Right ventricle myocardium superior (tissue), 1 donor: ENCODE measurements at regions of chr11 and their contacts with region 1.

Region 1: DNA sequence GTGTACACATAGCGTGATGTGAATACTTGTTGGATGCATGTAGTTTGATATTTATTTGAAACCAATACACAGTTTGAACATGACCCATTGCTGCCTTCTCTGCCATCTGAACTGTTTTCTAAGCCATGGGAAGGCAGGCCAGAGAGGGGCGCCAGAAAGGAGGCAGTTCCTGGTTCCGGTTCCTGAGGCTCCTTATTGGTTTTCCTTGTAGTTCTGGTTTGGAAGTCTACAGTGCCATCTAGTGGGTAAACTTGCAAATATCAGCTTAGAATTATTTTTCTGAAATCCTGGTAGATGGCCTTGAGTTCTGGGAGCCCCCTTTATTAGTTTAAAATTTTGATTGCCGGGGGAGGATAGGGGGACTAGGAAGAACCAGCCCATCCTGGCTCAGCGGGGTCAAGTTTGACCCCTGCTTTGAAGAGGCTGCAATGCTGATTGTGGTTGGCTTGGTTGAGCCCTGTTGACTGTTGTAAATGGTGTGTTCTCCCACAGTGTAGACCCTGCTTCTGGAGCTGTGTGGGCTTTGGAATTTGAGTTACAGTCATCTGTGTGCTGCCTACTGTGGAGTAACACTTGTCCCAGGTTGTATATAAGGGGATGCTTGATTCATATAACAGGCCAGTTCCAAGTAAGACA is 48.4 kb downstream of the GRAMD1B start:
- DNase-seq: peak; percentile 58
- ATAC-seq: peak; percentile 74

Region 2: DNA sequence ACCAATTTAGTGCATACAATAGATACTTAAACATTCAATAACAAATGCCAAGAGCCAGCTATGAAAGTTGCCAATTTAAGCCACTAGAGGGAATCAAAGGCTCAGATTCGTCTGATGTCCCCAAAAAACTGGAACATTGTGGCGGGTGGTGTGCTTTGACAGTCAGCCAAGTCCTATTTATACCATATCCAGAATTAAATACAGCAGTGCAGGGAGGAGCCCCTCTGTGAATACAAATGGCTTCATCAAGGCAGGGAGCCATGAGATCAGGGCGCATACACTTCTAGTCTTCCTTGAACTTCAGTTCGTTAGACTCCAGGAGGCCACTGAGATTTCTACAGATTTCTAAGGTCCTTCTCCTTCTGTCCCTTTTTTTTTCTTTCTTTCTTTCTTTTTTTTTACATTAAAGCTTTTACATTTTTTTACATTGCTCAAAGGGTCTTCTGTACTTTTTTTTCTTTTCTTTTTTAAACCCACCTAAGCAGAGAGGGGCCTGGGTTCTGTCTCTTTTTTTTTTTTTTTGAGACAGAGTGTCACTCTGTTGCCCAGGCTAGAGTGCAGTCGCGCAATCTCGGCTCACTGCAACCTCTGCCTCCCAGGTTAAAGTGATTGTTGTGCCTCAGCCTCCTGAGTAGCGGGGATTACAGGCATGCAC is 375.0 kb before region 1 on chr11:
- intact Hi-C with region 1: loop called (anchors 10 kb)
- DNase-seq: peak; percentile 56
- ATAC-seq: peak; percentile 86

Region 3: GRCh38 chr11:123261345-123262106 is 216.9 kb before region 1 on chr11:
- intact Hi-C with region 1: no loop called
- DNase-seq: peak; percentile 90
- ATAC-seq: peak; percentile 97

Region 4: DNA sequence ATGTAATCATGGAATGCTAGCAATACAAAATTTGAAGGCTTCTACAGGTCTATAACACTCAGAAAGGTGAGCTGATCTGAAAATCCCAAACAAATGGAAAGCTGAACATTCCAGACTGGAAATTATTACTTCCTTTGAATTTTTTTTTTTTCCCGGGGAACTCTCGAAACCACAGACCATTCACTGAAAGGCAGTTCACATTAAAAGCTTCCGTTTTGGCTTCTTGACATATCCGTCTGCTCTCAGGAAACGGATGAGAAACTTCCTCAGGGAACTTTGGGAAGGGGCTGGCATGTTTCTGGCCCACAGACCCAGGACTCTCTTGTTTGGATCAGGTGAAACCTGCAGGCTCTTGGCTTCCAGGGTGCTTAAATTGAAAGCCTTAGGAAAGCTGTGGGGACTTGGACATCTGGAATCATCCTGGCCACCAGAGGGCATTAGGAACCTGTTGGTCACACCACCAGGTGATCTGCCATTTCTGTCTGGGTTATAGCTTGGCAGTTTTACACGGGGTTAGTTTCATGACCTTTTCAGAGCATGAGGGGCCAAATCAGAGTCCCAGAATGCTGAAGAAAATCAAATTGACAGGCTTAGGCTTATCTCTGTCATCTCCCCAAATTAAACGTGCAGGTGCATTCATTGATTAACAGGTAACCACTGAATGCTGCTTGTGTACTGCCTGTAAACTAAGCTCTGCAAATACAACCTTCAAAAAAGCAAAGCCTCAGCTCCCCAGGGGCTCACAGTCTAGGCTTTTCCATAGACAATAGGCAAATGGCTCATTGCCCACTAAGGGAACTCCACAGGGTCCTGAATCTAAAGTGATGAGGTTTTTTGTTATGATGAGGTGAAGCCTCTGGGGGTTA is 71.1 kb before region 1 on chr11:
- intact Hi-C with region 1: loop called (anchors 5 kb)
- DNase-seq: peak; percentile 41
- ATAC-seq: peak; percentile 64